Calu3 (cell line): ENCODE measurements at regions of chr12 and their contacts with region 1.

Region 1: GRCh38 chr12:95102916-95103671 is 29.7 kb upstream of the NR2C1 start:
- DNase-seq: peak; percentile 73
- H3K4me3 Mint-ChIP-seq: peak overlapping the region; percentile 13
- H3K27ac Mint-ChIP-seq: peak overlapping the region; percentile 84
- H3K4me1 Mint-ChIP-seq: peaks cover 64% of the 10 kb centered on the region
- H3K27me3 Mint-ChIP-seq: no peaks in the 10 kb centered on the region
- CTCF ChIP-seq: no peak

Region 2: DNA sequence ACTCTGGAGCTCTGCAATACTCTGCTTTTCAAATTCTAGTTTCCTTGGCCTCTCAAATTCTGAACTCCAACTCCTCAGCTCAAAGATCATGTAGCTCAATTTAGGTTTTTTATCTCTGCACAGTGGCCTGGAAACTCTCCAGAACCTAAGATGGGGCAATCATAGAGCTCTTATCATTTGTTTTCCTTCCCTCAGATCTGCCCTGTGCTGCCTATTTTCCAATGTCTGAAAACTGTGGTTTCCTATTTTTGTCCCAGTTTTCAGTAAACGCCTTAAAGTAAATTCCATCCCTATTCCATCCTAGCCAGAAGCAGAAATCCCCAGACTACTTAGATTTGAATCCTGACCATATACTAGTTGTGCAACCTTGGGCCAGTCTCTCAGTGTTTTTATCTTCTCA is 716.7 kb before region 1 on chr12:
- CTCF ChIA-PET with region 1: no interaction called
- intact Hi-C with region 1: no loop called
- DNase-seq: no peak
- H3K4me3 Mint-ChIP-seq: no peak overlapping the region
- H3K27ac Mint-ChIP-seq: no peak overlapping the region
- H3K4me1 Mint-ChIP-seq: peaks cover under 1% of the 10 kb centered on the region
- H3K27me3 Mint-ChIP-seq: no peaks in the 10 kb centered on the region
- CTCF ChIP-seq: no peak

Region 3: GRCh38 chr12:95473884-95474659 is 371.0 kb after region 1 on chr12 and contains the start of gene METAP2:
- CTCF ChIA-PET with region 1: no interaction called
- intact Hi-C with region 1: loop called (anchors 1 kb)
- DNase-seq: peak; percentile 98
- H3K4me3 Mint-ChIP-seq: peak within 1 kb of the TSS; percentile 89
- H3K27ac Mint-ChIP-seq: peak within 1 kb of the TSS; percentile 97
- H3K4me1 Mint-ChIP-seq: peaks cover 28% of the 10 kb centered on the region
- H3K27me3 Mint-ChIP-seq: no peaks in the 10 kb centered on the region
- CTCF ChIP-seq: no peak
- total RNA-seq, gene METAP2: 96.0 and 96.3 TPM in 2 replicates